CD4-positive, alpha-beta memory T cell (primary cell): ENCODE measurements at regions of chrX and their contacts with region 1.

Region 1: GRCh38 chrX:74614093-74614909 is at the start of gene RLIM:
- DNase-seq: peak; percentile 91 to 97 (median 95)
- H3K4me3 ChIP-seq: peak within 1 kb of the TSS; percentile 68 to 73
- H3K4me3 Mint-ChIP-seq: peak within 1 kb of the TSS; percentile 97 to 100 (median 99)
- H3K27ac ChIP-seq: peak within 1 kb of the TSS; percentile 97
- H3K27ac Mint-ChIP-seq: peak within 1 kb of the TSS; percentile 99 to 100 (median 100)
- H3K4me1 ChIP-seq: peaks cover 22% of the 10 kb centered on the region
- H3K4me1 Mint-ChIP-seq: peaks cover 8 to 39% (median 21%) of the 10 kb centered on the region in 4 donors
- H3K27me3 ChIP-seq: no peaks in the 10 kb centered on the region
- H3K27me3 Mint-ChIP-seq: no peaks in the 10 kb centered on the region
- total RNA-seq, gene RLIM: 43.8 to 44.5 TPM

Region 2: DNA sequence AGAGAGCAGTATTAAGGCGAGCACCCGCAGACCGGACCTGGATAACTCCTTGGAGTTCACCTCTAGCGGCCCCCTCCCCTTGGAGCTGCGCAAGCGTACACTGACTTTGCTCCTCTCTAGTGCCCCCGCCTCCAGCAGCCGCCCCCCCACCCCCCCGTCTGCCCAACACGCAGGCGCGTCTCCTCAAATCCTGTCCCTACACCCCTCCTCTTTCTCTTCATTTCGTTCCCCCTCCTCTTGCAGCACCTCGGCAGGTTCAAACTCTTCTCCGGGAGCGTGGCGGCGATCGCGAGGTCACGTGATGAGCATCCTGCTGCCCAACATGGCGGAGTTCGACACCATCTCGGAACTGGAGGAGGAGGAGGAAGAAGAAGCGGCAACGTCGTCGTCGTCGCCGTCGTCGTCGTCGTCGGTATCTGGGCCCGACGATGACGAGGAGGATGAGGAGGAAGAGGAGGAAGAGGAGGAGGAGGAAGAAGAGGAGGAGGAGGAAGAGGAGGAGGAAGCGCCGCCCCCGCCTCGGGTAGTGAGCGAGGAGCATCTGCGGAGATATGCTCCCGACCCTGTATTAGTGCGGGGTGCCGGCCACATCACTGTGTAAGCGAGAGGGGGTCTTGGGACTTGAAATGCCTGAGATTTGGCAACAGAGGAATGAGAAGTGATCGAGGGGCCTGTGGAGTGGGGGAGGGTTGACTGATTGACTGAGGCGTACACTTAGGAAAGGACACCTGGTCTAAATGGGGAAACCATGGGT is 1051.1 kb before region 1 on chrX and contains the start of gene CHIC1:
- CTCF ChIA-PET with region 1: no interaction called
- POLR2A ChIA-PET with region 1: no interaction called
- intact Hi-C with region 1: loop called (anchors 5 kb)
- DNase-seq: peak; percentile 74 to 85 (median 77)
- H3K4me3 ChIP-seq: peak within 1 kb of the TSS; percentile 73 to 81
- H3K4me3 Mint-ChIP-seq: peak within 1 kb of the TSS; percentile 88 to 98 (median 94)
- H3K27ac ChIP-seq: peak within 1 kb of the TSS; percentile 78
- H3K27ac Mint-ChIP-seq: peak within 1 kb of the TSS; percentile 94 to 99 (median 99)
- H3K4me1 ChIP-seq: peaks cover 32% of the 10 kb centered on the region
- H3K4me1 Mint-ChIP-seq: peaks cover 4 to 48% (median 11%) of the 10 kb centered on the region in 4 donors
- H3K27me3 ChIP-seq: no peaks in the 10 kb centered on the region
- H3K27me3 Mint-ChIP-seq: no peaks in the 10 kb centered on the region
- total RNA-seq, gene CHIC1: 17.2 to 18.1 TPM

Region 3: DNA sequence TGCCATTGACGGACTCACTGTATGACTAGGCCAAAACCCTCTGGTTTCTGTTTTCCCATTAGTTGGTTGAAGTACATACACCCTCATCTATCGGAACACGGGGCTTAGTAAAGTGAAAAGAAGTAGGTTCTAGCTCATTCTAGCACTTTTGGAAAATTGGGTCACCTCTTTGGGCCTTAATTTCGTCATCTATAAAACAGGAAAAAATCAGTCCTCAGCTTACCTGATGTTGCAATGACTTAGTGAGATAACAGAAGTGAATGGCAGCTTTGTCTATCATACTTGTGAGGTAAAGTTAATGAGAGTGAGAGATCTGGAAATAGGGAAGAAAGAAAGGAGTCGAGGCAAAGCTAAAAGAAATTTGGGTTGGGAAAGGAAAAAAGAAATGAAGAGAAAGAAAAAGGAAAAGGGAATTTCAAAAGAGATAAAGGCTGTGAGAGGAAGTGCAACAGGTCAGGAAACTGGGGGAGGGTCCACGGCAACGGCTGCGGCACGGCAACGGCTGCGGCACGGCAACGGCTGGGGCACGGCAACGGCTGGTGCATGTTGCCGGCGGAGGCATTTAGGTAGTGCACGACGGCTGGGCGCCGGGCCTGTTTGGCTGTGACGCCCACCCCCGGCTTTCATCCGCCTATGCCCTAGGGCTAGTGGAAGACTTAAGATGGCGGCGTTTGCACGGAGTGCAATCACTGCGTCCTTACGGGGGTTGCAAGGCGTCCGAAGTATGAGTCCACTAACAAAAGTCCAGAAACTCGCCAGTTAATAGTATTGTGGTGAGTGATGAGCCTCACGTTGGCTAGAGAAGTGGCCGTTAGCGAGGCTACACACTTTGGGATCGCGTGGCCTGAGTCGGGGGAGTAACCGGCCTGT is 670.4 kb before region 1 on chrX:
- CTCF ChIA-PET with region 1: no interaction called
- POLR2A ChIA-PET with region 1: no interaction called
- intact Hi-C with region 1: loop called (anchors 5 kb)
- DNase-seq: peak; percentile 85 to 90 (median 88)
- H3K4me3 ChIP-seq: peak overlapping the region; percentile 73 to 94
- H3K4me3 Mint-ChIP-seq: peak overlapping the region; percentile 88 to 97 (median 91)
- H3K27ac ChIP-seq: peak overlapping the region; percentile 74
- H3K27ac Mint-ChIP-seq: peak overlapping the region; percentile 95 to 99 (median 98)
- H3K4me1 ChIP-seq: peaks cover 23% of the 10 kb centered on the region
- H3K4me1 Mint-ChIP-seq: peaks cover 12 to 35% (median 25%) of the 10 kb centered on the region in 4 donors
- H3K27me3 ChIP-seq: no peaks in the 10 kb centered on the region
- H3K27me3 Mint-ChIP-seq: no peaks in the 10 kb centered on the region

Region 4: DNA sequence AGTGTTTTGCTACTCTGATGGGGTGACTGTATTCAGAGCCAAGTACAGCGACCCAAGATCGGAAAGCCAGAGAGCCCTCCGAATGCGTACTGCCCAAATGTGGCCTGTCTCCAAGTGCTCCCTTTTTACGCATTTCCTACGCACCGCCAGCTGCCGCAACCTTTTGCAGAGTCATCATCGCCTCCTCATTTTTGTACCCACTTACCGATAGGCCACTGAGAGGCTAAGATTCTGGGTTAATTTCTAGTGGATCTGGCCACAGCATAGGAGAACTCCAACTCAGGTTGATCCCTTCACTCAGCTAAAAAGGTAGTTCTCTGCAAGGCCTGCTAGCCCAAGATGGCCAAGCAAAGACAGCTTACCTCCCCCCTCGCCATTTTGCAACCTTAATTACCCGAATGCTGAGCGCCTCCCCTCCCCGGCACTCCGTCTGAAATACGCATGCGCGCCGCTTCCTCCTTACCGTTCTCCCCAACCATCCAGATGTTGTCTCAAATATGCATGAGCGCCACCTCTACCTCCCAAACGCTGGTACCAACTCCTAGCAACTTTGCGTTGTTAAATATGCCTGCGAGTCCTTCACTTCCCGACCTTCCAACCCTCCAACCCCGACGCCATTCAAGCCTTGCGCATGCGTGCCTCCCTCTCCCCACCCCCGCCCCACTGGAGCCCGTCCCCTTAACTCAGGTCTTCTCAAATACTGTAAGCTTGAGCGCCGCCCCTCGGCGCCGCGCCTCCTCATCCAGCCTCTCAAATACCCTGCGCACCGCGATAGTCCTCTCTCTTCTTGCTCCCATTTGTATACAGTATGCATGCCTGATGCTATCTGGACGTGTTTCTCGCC is 322.1 kb before region 1 on chrX:
- CTCF ChIA-PET with region 1: no interaction called
- POLR2A ChIA-PET with region 1: interaction called, 8 read pairs
- intact Hi-C with region 1: loop called (anchors 5 kb)
- DNase-seq: peak; percentile 81 to 88 (median 85)
- H3K4me3 ChIP-seq: peak overlapping the region; percentile 94 to 96
- H3K4me3 Mint-ChIP-seq: peak overlapping the region; percentile 90 to 100 (median 96)
- H3K27ac ChIP-seq: peak overlapping the region; percentile 84
- H3K27ac Mint-ChIP-seq: peak overlapping the region; percentile 94 to 98 (median 98)
- H3K4me1 ChIP-seq: peaks cover 28% of the 10 kb centered on the region
- H3K4me1 Mint-ChIP-seq: peaks cover 5 to 34% (median 13%) of the 10 kb centered on the region in 4 donors
- H3K27me3 ChIP-seq: no peaks in the 10 kb centered on the region
- H3K27me3 Mint-ChIP-seq: no peaks in the 10 kb centered on the region

Region 5: GRCh38 chrX:75156021-75156945 is 542.0 kb after region 1 on chrX and contains the start of gene ABCB7:
- CTCF ChIA-PET with region 1: no interaction called
- POLR2A ChIA-PET with region 1: no interaction called
- intact Hi-C with region 1: loop called (anchors 10 kb)
- DNase-seq: peak; percentile 56 to 70 (median 61)
- H3K4me3 ChIP-seq: peak within 1 kb of the TSS; percentile 65 to 74
- H3K4me3 Mint-ChIP-seq: peak within 1 kb of the TSS; percentile 89 to 98 (median 95)
- H3K27ac ChIP-seq: peak within 1 kb of the TSS; percentile 76
- H3K27ac Mint-ChIP-seq: peak within 1 kb of the TSS; percentile 95 to 98 (median 97)
- H3K4me1 ChIP-seq: peaks cover 20% of the 10 kb centered on the region
- H3K4me1 Mint-ChIP-seq: peaks cover 20 to 49% (median 31%) of the 10 kb centered on the region in 4 donors
- H3K27me3 ChIP-seq: no peaks in the 10 kb centered on the region
- H3K27me3 Mint-ChIP-seq: no peaks in the 10 kb centered on the region
- total RNA-seq, gene ABCB7: 24.1 to 29.4 TPM

Region 6: DNA sequence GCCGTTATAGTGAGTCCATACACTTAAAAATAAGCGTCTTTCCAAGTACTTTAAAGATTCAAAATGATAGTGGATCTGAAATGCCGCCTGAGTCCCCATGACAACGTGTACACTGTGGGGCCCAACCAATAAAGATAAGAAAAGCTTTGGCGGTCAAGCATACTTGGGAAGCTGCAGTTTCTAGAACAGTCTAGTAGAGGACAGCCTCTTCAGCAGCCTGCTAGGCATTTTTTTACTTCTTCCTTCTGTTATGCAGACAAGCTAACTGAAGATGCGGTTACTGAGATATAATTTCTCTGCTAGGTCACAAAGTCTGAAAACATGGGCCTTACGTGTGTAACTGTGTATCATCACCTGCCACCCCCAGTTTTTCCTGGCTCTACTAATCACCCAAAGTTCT is 659.2 kb after region 1 on chrX:
- CTCF ChIA-PET with region 1: interaction called, 3 read pairs
- POLR2A ChIA-PET with region 1: interaction called, 4 read pairs
- intact Hi-C with region 1: loop called (anchors 1 kb)
- DNase-seq: peak in 1 of 5 donors; percentile 57
- H3K4me3 ChIP-seq: peak overlapping the region; percentile 31 to 64
- H3K4me3 Mint-ChIP-seq: peak overlapping the region; percentile 88 to 97 (median 94)
- H3K27ac ChIP-seq: peak overlapping the region; percentile 83
- H3K27ac Mint-ChIP-seq: peak overlapping the region; percentile 91 to 98 (median 94)
- H3K4me1 ChIP-seq: peaks cover 43% of the 10 kb centered on the region
- H3K4me1 Mint-ChIP-seq: peaks cover 20 to 57% (median 41%) of the 10 kb centered on the region in 4 donors
- H3K27me3 ChIP-seq: no peaks in the 10 kb centered on the region
- H3K27me3 Mint-ChIP-seq: no peaks in the 10 kb centered on the region

Region 7: DNA sequence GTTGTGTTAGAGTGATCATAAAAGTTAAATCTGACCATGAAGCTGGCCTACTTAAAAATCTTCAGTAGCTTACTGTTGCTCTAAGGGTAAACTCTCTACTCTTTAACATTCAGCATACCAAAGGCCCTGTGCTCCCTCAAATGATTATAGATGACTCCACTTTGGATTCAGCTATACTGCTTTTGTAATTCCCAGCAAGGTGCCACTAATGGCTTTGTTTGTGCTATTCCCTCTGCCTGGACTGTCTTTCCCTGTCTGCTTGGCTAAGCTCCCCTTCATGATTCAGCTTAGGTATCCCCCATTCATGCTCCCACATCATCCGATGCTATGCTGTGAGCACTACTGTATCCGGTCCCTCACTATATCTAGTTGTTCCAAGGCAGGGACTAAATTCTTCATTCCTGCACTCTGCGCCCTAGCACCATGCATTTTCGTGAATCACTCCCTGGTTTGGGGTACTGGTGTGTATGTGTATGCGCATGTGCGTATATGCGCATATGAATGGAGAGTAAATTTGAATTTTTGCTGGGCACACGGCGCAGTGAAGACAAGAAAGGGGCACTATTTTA is 1558.1 kb after region 1 on chrX:
- CTCF ChIA-PET with region 1: no interaction called
- POLR2A ChIA-PET with region 1: interaction called, 7 read pairs
- intact Hi-C with region 1: loop called (anchors 2 kb)
- DNase-seq: no peak
- H3K4me3 ChIP-seq: peak overlapping the region; percentile 38 to 61
- H3K4me3 Mint-ChIP-seq: peak overlapping the region; percentile 92 to 96 (median 96)
- H3K27ac ChIP-seq: peak overlapping the region; percentile 69
- H3K27ac Mint-ChIP-seq: peak overlapping the region; percentile 94 to 98 (median 96)
- H3K4me1 ChIP-seq: peaks cover 50% of the 10 kb centered on the region
- H3K4me1 Mint-ChIP-seq: peaks cover 35 to 69% (median 48%) of the 10 kb centered on the region in 4 donors
- H3K27me3 ChIP-seq: no peaks in the 10 kb centered on the region
- H3K27me3 Mint-ChIP-seq: no peaks in the 10 kb centered on the region